ENCODE measurements at regions of chr11 and their contacts with region 1.

Region 1: DNA sequence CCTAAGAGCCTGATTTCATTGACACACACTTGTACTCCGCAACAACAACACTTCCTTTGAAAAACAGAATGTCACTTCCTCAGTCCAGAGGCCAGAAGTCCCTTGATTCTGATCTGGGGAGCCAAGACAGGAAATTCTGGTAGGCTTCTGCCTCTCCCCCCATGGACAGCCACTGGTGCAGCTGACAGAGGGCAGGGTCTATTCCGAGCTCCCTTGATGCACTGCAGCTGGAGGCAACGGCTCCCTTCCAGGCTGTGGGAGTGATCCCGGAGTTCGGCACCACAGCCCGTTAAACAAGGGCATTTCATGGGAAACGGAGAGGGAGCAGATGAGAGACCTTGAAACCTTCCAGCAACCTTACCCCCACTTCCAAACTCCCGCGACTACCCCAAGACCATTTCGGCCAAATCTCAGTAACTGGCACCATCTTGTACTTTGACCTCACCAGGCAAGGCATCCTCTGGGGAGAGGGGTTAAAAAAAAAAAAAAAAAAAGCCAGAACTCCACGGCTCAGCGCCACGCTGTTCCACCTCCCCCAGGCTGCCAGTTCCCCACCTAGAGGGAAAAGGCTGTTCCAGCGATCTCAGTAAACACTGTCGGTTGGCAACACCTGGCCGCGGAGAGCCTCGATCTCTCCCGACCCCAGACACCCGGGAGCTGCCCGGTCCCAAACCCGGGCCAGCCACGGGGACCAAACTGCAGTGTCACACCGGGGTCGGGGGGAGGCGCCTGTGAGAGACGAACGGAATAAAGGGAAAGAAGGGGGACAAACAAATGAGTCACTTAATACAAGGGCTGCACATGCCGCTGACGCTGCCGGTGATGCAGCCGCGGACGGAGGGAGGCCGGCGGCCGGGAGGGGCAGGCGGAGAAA is 1.1 kb downstream of the GAB2 start:
- DNase-seq: peak; percentile 66 to 91 (median 86)
- H3K4me3 ChIP-seq: peak overlapping the region; percentile 65 to 95 (median 86)
- H3K27ac ChIP-seq: peak overlapping the region; percentile 89 to 100 (median 98)
- H3K27me3 ChIP-seq: no peaks in the 10 kb centered on the region
- CTCF ChIP-seq: peak; percentile 16 to 79 (median 60)

Region 2: DNA sequence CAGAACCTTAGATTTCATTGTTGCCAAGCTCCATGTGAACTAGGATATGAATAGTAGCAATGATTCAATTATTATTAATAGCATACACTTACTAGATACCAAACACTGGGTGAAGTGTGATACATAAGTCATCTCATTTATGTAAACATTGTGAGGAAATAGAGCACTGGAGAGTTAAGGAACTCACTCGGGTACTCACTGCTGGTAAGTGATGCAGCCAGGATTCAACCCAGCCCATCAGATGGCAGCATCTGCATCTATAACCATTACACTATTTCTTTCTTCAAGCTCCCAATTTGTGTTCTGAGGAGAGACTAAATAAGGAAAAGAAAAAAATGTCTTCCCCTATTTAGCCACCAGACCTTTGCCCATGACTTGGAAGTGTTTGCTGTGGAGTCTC is 266.9 kb before region 1 on chr11:
- intact Hi-C with region 1: loop called in 1 of 2 experiments (anchors 5 kb)
- DNase-seq: peak in 4 of 10 donors; percentile 25 to 61 (median 56)
- H3K4me3 ChIP-seq: no peak overlapping the region
- H3K27ac ChIP-seq: no peak overlapping the region
- H3K27me3 ChIP-seq: no peaks in the 10 kb centered on the region
- CTCF ChIP-seq: peak in 53 of 56 donors; percentile 14 to 73 (median 52)

Region 3: DNA sequence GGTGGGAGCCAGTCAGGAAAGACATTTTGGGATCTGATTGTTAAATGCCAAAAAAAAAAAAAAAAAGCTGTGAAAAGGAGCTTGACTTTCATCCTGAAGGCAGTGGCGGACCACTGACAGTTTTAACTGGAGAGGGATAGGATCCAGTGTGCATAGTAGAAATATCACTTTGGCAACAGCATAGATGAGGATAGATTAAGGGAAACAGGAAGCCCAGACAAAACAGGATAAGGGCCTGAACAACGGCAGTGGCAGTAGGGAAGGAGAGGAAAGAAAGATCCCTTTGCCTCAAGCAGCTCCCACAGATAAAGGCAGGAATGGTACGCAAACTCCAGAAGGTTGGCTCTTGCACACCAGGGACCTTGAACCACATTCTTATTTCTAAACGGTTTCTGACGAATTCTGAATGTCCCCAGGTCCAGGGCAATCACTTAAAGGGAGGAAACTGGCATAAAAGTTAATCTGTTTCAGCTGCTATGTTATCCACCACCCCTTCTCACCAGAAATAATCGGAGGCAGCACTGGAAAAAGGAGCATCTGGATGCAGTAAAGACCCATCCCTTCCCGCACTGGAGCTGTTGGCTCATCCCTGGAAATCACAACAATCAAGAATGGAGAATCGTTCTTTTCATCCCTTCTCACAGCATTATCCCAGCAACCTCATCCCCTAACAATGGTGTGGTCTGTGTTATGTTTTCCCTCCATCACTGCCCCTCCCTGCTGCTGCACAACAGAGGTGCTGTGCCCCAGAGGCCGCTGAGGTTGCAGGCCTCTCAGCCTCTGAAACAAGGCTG is 98.0 kb before region 1 on chr11:
- intact Hi-C with region 1: loop called (anchors 2 to 5 kb)
- DNase-seq: peak; percentile 5 to 84 (median 75)
- H3K4me3 ChIP-seq: peak overlapping the region in 29 of 59 donors; percentile 3 to 40 (median 17)
- H3K27ac ChIP-seq: peak overlapping the region in 58 of 59 donors; percentile 66 to 99 (median 93)
- H3K27me3 ChIP-seq: no peaks in the 10 kb centered on the region
- CTCF ChIP-seq: peak in 14 of 56 donors; percentile 11 to 44 (median 24)

Region 4: DNA sequence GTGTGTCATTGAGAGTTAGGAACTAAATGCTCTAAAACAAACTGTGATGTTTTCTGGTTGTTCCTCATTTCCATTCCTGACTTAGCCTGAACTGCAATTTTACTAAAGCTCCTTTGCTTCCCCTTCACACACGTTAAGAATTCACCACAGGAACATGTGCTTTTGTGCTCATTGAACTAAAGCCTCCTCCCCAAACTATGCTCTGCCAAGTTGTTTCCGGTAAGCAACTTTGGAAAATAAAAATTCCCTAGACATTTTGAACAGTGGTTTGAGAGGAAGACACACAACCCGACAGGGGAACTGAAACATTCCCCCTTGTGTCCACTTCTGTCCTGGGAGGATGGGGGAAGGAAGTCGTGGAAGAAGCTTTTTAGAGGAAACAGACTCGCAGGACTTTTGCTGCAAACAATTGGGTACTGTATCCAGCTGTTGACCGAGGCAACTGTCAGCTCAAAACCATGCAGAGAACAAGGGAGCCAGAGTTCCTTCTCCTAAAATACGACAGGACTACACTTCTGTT is 65.8 kb before region 1 on chr11:
- intact Hi-C with region 1: loop called in 1 of 2 experiments (anchors 2 kb)
- DNase-seq: no peak
- H3K4me3 ChIP-seq: peak overlapping the region in 57 of 59 donors; percentile 2 to 60 (median 29)
- H3K27ac ChIP-seq: peak overlapping the region; percentile 63 to 99 (median 90)
- H3K27me3 ChIP-seq: no peaks in the 10 kb centered on the region
- CTCF ChIP-seq: peak in 8 of 56 donors; percentile 7 to 19 (median 14)

Region 5: DNA sequence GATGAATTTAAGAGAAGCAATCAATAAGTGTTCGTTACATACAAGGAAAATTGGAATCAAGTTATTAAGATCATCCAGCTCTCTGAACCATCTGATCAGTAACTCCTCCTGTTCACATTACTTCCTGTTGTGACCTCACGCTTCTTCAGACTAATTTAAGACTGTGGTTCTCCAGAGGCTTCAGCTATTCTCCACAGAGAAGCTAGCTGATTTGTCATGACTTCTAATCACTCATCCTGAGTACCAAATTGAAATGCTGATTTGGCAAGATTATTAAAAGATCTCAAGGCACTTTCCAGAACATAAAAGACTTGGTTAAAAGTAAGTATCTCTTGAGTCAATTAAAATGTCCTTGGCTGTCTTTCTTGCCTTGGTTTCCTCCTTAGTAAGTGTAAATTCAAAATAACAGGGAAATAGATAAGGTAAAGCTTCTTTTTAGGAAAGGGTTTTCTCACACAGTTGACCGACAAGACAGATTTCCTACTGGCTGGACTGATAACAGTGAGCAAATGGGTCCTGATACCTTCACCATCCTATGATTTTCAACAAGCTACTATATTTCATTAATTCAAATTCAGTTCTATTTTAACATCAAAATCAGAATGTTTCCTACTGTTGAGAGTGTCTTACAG is 37.4 kb before region 1 on chr11:
- intact Hi-C with region 1: loop called (anchors 5 kb)
- DNase-seq: no peak
- H3K4me3 ChIP-seq: no peak overlapping the region
- H3K27ac ChIP-seq: peak overlapping the region in 16 of 59 donors; percentile 3 to 63 (median 36)
- H3K27me3 ChIP-seq: no peaks in the 10 kb centered on the region
- CTCF ChIP-seq: no peak

Region 6: GRCh38 chr11:78465169-78465942 is 48.8 kb after region 1 on chr11:
- intact Hi-C with region 1: no loop called
- DNase-seq: no peak
- H3K4me3 ChIP-seq: no peak overlapping the region
- H3K27ac ChIP-seq: no peak overlapping the region
- H3K27me3 ChIP-seq: no peaks in the 10 kb centered on the region
- CTCF ChIP-seq: no peak

Region 7: DNA sequence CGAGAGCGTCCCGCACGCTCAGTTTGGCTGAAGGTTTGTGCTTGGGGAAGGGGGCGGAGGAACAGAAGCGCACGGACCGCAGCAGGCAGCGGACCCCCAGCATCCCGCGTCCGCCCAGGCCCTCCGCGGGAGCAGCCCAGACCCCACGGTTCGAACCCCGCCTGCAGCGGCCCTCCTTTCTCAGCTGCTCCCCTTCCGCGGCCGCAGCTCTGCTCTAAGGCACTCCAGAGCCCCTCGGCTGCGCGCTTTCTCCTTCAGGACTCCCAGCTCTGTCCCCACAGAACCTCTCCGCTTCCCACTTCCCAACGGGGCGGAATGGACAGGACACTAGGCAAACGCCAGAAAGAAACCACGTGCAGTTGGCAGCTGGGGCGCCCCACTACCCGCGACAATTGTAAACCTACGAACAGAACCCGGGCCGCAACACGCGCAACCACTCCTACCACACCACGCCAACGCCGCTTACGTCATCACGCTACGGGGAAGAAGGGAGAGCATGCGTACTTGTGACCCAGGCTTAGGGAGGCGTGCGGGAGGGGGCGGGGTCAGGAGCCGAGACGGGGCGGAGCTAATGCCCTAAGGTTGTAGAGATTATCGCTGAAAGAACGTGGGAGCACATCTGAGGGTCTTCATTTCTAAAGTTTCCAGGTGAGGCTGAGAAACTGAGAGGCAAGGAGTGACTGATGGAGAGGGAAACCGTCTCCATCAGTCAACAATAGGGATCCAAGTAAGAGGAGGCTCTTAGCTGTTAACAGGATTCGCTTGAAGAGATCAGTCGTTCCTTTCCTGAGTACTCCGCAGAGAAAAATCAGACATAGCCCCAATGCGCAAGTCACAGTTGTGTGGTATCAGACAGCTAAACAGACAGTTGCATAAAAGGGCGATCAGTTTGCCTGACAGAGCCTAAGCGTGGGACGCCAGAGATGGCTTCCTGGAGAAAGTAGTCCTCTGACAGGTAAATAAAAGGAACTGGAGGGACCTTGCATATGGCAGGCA is 158.1 kb after region 1 on chr11 and contains the start of gene NARS2:
- intact Hi-C with region 1: loop called (anchors 5 to 10 kb)
- DNase-seq: peak; percentile 95 to 98 (median 96)
- H3K4me3 ChIP-seq: peak within 1 kb of the TSS; percentile 64 to 100 (median 91)
- H3K27ac ChIP-seq: peak within 1 kb of the TSS in 58 of 59 donors; percentile 2 to 94 (median 82)
- H3K27me3 ChIP-seq: no peaks in the 10 kb centered on the region
- CTCF ChIP-seq: peak in 16 of 56 donors; percentile 5 to 43 (median 18)
- total RNA-seq, gene NARS2: 9.8 to 23.2 (median 15.9) TPM

Region 8: GRCh38 chr11:78982473-78982872 is 565.9 kb after region 1 on chr11:
- intact Hi-C with region 1: no loop called
- DNase-seq: no peak
- H3K4me3 ChIP-seq: no peak overlapping the region
- H3K27ac ChIP-seq: no peak overlapping the region
- H3K27me3 ChIP-seq: no peaks in the 10 kb centered on the region
- CTCF ChIP-seq: no peak

Measured in dorsolateral prefrontal cortex (tissue), 120 donors.